CD14-positive monocyte (primary cell): ENCODE measurements at regions of chr6 and their contacts with region 1.

Region 1: GRCh38 chr6:166999145-166999883 is at the start of gene CEP43:
- DNase-seq: peak; percentile 93 to 95 (median 94)
- H3K4me3 ChIP-seq: peak within 1 kb of the TSS; percentile 76 to 99 (median 98)
- H3K4me3 Mint-ChIP-seq: peak within 1 kb of the TSS; percentile 84 to 92
- H3K27ac ChIP-seq: peak within 1 kb of the TSS; percentile 67 to 80
- H3K27ac Mint-ChIP-seq: peak within 1 kb of the TSS; percentile 69 to 87 (median 84)
- H3K4me1 ChIP-seq: peaks cover 20 to 21% of the 10 kb centered on the region in 2 donors
- H3K4me1 Mint-ChIP-seq: peaks cover 28% of the 10 kb centered on the region
- H3K27me3 ChIP-seq: no peaks in the 10 kb centered on the region
- H3K27me3 Mint-ChIP-seq: no peaks in the 10 kb centered on the region
- CTCF ChIP-seq: no peak
- polyA plus RNA-seq, gene CEP43: 3.8 to 7.1 (median 6.4) TPM

Region 2: GRCh38 chr6:166721576-166721975 is 277.7 kb before region 1 on chr6:
- intact Hi-C with region 1: no loop called
- DNase-seq: no peak
- H3K4me3 ChIP-seq: no peak overlapping the region
- H3K4me3 Mint-ChIP-seq: no peak overlapping the region
- H3K27ac ChIP-seq: no peak overlapping the region
- H3K27ac Mint-ChIP-seq: no peak overlapping the region
- H3K4me1 ChIP-seq: no peaks in the 10 kb centered on the region
- H3K4me1 Mint-ChIP-seq: no peaks in the 10 kb centered on the region
- H3K27me3 ChIP-seq: no peaks in the 10 kb centered on the region
- H3K27me3 Mint-ChIP-seq: peaks cover 2 to 3% (median 2%) of the 10 kb centered on the region in 3 donors
- CTCF ChIP-seq: no peak

Region 3: GRCh38 chr6:166936079-166936787 is 63.1 kb before region 1 on chr6:
- intact Hi-C with region 1: no loop called
- DNase-seq: no peak
- H3K4me3 ChIP-seq: no peak overlapping the region
- H3K4me3 Mint-ChIP-seq: no peak overlapping the region
- H3K27ac ChIP-seq: peak overlapping the region in 1 of 2 donors; percentile 43
- H3K27ac Mint-ChIP-seq: peak overlapping the region in 2 of 7 donors; percentile 40 to 65
- H3K4me1 ChIP-seq: no peaks in the 10 kb centered on the region
- H3K4me1 Mint-ChIP-seq: peaks cover 1% of the 10 kb centered on the region
- H3K27me3 ChIP-seq: no peaks in the 10 kb centered on the region
- H3K27me3 Mint-ChIP-seq: no peaks in the 10 kb centered on the region
- CTCF ChIP-seq: no peak

Region 4: DNA sequence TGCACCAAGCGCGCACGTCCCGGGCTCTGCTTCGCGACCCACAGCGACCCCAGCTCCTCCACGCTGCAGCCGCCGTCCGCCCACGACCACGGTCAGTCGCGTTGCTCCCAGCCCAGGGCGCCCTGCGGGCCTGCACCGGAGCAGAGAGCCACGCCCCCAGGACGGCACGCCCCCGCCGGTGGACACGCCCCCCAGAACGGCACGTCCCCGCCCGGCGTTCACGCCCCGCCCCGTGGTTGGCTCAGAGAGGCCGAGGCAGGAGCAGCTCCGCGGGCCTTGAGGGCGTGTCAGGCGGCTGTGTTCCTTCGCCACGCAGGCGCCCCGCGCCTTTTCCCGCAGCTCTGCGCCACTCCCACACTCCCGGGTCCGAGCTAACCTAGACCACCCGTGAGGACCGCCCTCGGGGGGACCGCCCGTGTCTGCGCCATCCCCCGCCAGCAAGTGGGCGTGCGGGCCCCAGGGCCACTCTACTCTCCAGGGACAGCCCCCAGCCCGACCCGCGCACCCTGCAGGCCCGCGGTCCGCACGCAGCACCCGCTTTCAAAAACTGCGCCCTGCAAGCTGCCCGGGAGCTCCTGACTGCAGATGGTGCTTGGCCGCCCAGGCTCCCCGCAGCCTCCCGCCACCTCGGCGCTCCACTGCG is 42.7 kb before region 1 on chr6 and contains the start of gene RNASET2:
- intact Hi-C with region 1: loop called (anchors 2 kb)
- DNase-seq: peak; percentile 88 to 93 (median 91)
- H3K4me3 ChIP-seq: peak within 1 kb of the TSS; percentile 85 to 97 (median 95)
- H3K4me3 Mint-ChIP-seq: peak within 1 kb of the TSS; percentile 93 to 97
- H3K27ac ChIP-seq: peak within 1 kb of the TSS; percentile 99 to 100
- H3K27ac Mint-ChIP-seq: peak within 1 kb of the TSS; percentile 98 to 100 (median 100)
- H3K4me1 ChIP-seq: peaks cover 70 to 80% of the 10 kb centered on the region in 2 donors
- H3K4me1 Mint-ChIP-seq: peaks cover 69% of the 10 kb centered on the region
- H3K27me3 ChIP-seq: no peaks in the 10 kb centered on the region
- H3K27me3 Mint-ChIP-seq: peaks cover 0 to 8% (median 3%) of the 10 kb centered on the region in 3 donors
- CTCF ChIP-seq: no peak
- polyA plus RNA-seq, gene RNASET2: 432 to 562 (median 493) TPM

Region 5: GRCh38 chr6:167047554-167047953 is 48.2 kb after region 1 on chr6:
- intact Hi-C with region 1: loop called in 1 of 2 experiments (anchors 5 kb)
- DNase-seq: peak; percentile 88 to 90 (median 90)
- H3K4me3 ChIP-seq: peak overlapping the region; percentile 2 to 66 (median 36)
- H3K4me3 Mint-ChIP-seq: peak overlapping the region; percentile 49 to 85
- H3K27ac ChIP-seq: peak overlapping the region; percentile 85
- H3K27ac Mint-ChIP-seq: peak overlapping the region; percentile 92 to 98 (median 95)
- H3K4me1 ChIP-seq: peaks cover 22 to 25% of the 10 kb centered on the region in 2 donors
- H3K4me1 Mint-ChIP-seq: peaks cover 26% of the 10 kb centered on the region
- H3K27me3 ChIP-seq: no peaks in the 10 kb centered on the region
- H3K27me3 Mint-ChIP-seq: peaks cover 0 to 2% (median 2%) of the 10 kb centered on the region in 3 donors
- CTCF ChIP-seq: no peak

Region 6: DNA sequence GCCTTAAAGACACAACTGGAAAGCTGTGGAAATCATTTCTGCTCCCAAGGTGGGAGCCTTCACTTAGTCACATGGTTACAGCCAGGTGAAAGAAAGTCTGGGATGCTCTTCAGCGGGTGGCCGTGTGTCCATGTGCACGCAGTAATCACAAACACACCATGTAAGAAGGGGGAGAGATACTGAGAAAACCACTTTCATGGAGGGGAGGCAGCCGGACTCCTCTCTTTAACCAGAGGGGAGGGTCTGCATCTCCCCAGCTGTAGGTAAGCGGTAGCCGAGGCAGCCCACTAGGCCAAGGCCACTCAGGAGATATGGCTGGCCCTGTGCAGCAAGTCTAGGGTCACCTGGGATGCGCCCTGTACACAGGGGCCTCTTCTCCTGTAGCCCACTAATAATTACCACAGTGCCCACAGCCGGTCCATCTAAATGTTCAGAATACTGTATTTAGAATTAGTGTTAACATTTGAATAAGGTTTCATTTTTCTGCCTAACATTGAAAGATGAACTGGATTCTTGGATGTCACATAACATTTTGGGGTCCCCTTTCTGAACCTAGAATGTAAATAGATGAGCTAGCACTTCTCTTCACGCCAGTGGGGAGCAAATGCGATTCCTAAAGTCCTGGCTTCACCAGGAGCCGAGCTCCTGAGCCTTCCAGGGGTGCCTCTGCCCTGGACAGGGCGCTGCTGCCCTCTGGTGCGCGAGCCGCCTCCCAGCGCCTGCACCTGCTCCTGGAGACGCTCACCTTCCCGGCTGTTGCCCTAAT is 142.5 kb after region 1 on chr6:
- intact Hi-C with region 1: loop called (anchors 5 to 10 kb)
- DNase-seq: peak in 2 of 3 donors; percentile 52 to 55
- H3K4me3 ChIP-seq: no peak overlapping the region
- H3K4me3 Mint-ChIP-seq: peak overlapping the region in 1 of 2 donors; percentile 3
- H3K27ac ChIP-seq: no peak overlapping the region
- H3K27ac Mint-ChIP-seq: peak overlapping the region in 3 of 7 donors; percentile 7 to 52 (median 25)
- H3K4me1 ChIP-seq: peaks cover 0 to 11% of the 10 kb centered on the region in 2 donors
- H3K4me1 Mint-ChIP-seq: peaks cover 18% of the 10 kb centered on the region
- H3K27me3 ChIP-seq: no peaks in the 10 kb centered on the region
- H3K27me3 Mint-ChIP-seq: peaks cover 3 to 4% (median 3%) of the 10 kb centered on the region in 3 donors
- CTCF ChIP-seq: peak; percentile 86